Left lung (tissue), 14 donors: ENCODE measurements at regions of chr2 and their contacts with region 1.

Region 1: DNA sequence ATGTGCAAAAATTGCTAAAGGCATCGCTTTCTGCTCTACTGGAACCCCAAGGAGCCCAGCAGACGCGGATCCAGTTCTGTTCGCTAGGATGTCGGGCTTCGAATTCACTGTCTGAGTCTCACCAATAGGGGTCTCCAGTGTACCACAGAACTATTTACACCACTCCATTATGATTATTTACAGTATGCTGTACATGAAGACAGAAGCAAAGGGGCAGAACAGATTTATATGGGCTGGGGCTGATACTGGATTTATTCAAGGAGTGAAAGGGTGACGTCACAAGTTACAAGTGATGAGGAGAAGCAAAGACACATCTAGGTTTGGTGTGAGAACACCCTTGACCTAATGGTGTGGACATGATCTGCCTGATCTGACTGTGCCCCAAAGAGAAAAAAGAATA is 185.3 kb upstream of the ATP5MC3 start:
- DNase-seq: peak in 2 of 4 donors; percentile 54 to 75
- ATAC-seq: peak; percentile 84
- H3K4me3 ChIP-seq: no peak overlapping the region
- H3K27ac ChIP-seq: no peak overlapping the region
- H3K4me1 ChIP-seq: no peaks in the 10 kb centered on the region
- H3K27me3 ChIP-seq: peaks cover 6 to 24% of the 10 kb centered on the region in 2 donors
- CTCF ChIP-seq: peak; percentile 60 to 66

Region 2: GRCh38 chr2:175478096-175478768 is 111.4 kb after region 1 on chr2:
- intact Hi-C with region 1: no loop called
- DNase-seq: no peak
- ATAC-seq: no peak
- H3K4me3 ChIP-seq: no peak overlapping the region
- H3K27ac ChIP-seq: no peak overlapping the region
- H3K4me1 ChIP-seq: no peaks in the 10 kb centered on the region
- H3K27me3 ChIP-seq: no peaks in the 10 kb centered on the region
- CTCF ChIP-seq: no peak

Region 3: GRCh38 chr2:176088048-176088936 is 721.5 kb after region 1 on chr2:
- intact Hi-C with region 1: loop called in 1 of 2 experiments (anchors 10 kb)
- DNase-seq: peak in 2 of 4 donors; percentile 72 to 85
- ATAC-seq: peak; percentile 88
- H3K4me3 ChIP-seq: no peak overlapping the region
- H3K27ac ChIP-seq: no peak overlapping the region
- H3K4me1 ChIP-seq: peaks cover 0 to 28% of the 10 kb centered on the region in 2 donors
- H3K27me3 ChIP-seq: peaks cover 99 to 100% of the 10 kb centered on the region in 2 donors
- CTCF ChIP-seq: peak; percentile 54 to 73